Posterior vena cava (tissue), 2 donors: ENCODE measurements at regions of chr10 and their contacts with region 1.

Region 1: DNA sequence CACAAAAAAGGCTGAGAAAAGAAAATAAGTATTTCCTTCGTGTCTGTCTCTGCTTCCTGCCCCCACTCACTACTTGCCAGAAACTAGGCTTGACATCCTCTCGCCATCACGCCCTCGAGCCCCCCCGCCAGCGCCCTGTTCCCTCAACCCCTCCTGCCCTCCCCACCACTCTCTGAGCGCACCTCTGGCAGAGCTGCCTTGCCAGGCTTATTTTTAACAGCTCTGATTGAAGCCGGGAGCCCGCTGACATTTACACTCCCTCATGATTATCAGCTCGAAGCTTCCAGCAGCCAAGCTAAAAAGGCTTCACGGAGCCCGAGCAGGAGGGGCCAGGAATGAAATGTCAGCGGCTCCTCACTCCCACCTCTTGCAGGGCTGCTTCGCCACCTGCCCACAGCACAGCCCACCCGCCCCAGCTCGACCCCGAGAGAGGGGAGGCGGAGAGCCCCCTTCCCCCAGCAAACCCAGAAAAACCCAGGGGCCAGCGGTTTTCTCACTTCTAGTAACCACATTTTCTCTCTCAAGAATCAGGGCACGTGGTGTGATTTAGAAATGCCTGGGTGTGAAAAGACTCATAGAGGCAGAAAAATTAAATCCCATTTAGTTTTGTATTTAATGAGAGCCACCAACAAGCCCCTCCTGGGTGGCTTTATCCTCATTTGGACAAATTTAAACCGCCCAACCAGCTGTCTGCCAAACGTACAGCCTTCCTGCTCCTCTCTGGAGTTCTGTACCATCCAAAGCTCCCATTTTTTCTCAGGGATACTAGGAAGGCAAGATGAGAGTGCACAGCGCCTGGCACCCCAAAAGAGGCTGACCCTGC is 89.3 kb downstream of the SLIT1 start:
- DNase-seq: no peak

Region 2: GRCh38 chr10:97072851-97073665 is 23.4 kb before region 1 on chr10:
- intact Hi-C with region 1: no loop called
- DNase-seq: peak; percentile 94

Region 3: GRCh38 chr10:97659589-97659988 is 563.1 kb after region 1 on chr10:
- intact Hi-C with region 1: loop called in 1 of 2 experiments (anchors 5 kb)
- DNase-seq: no peak